ENCODE measurements at regions of chr21 and their contacts with region 1.

Region 1: GRCh38 chr21:36156339-36156814 is 247 bp upstream of the DOP1B start:
- DNase-seq: peak; percentile 100
- ATAC-seq: peak; percentile 86
- H3K4me3 Mint-ChIP-seq: peak overlapping the region; percentile 81
- H3K27ac Mint-ChIP-seq: peak overlapping the region; percentile 60
- H3K4me1 Mint-ChIP-seq: peaks cover 22% of the 10 kb centered on the region
- H3K27me3 Mint-ChIP-seq: no peaks in the 10 kb centered on the region

Region 2: GRCh38 chr21:36122977-36123376 is 33.4 kb before region 1 on chr21:
- POLR2A ChIA-PET with region 1: no interaction called
- DNase-seq: no peak
- ATAC-seq: no peak
- H3K4me3 Mint-ChIP-seq: no peak overlapping the region
- H3K27ac Mint-ChIP-seq: no peak overlapping the region
- H3K4me1 Mint-ChIP-seq: peaks cover 7% of the 10 kb centered on the region
- H3K27me3 Mint-ChIP-seq: peaks cover 12% of the 10 kb centered on the region

Region 3: DNA sequence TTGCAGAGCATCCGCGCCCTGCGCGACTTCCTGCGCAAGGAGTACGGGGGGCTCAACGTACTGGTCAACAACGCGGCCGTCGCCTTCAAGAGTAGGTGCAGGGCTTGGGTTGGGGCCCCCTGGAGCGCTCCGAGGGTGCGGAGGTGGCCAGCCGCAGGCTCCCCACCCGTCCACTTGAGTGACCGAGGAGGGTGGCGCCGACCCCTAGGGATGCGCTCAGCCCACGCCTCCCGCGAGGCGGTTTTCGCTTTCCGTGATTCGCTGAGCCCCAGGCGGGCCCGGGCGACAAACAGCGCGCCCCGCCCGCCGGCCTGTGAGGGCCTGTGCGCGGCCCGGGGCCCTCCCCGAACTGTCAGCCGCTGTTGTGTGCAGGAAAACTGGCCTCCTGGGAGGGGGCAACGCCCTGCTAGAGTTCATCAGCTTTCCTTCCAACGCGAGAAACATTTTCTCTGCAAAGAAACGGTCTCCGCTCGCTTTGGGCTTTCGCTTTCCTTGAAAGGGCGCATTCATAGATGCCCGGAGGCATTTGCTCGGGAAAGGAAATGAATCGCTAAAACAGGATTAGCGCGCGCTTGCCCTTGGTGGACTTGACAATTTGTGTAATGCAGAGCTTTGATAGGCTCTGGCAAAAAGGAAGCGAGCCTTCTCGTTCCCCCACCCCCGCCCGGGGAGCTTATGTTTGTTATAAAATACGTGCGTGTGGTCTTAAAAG is 20.8 kb before region 1 on chr21:
- POLR2A ChIA-PET with region 1: interaction called, 31 read pairs
- DNase-seq: peak; percentile 84
- ATAC-seq: peak; percentile 92
- H3K4me3 Mint-ChIP-seq: peak overlapping the region; percentile 94
- H3K27ac Mint-ChIP-seq: peak overlapping the region; percentile 91
- H3K4me1 Mint-ChIP-seq: peaks cover 25% of the 10 kb centered on the region
- H3K27me3 Mint-ChIP-seq: peaks cover 2% of the 10 kb centered on the region

Region 4: GRCh38 chr21:36171741-36172331 is 15.5 kb after region 1 on chr21:
- POLR2A ChIA-PET with region 1: interaction called, 23 read pairs
- DNase-seq: no peak
- ATAC-seq: no peak
- H3K4me3 Mint-ChIP-seq: no peak overlapping the region
- H3K27ac Mint-ChIP-seq: peak overlapping the region; percentile 75
- H3K4me1 Mint-ChIP-seq: peaks cover 22% of the 10 kb centered on the region
- H3K27me3 Mint-ChIP-seq: no peaks in the 10 kb centered on the region

Region 5: DNA sequence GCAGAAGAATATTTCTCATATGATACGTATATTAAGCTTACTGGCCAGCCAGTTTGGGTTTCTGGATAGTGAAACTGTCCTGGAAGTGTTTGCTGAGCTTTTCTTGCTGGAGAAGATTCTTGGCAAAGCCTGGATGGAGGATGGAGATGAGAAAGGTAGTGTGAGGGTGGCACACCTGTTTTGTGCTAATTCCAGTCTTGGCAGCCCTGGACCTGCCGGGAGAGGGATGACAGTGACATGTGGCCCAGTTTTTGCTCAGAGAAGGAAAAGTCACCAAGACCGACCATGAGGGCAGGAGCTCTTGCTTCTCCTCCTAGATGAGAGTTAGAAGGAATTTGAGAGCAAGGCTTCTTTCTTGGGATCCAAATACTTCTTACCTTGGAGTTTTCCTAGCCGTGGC is 34.4 kb after region 1 on chr21:
- POLR2A ChIA-PET with region 1: interaction called, 11 read pairs
- DNase-seq: no peak
- ATAC-seq: no peak
- H3K4me3 Mint-ChIP-seq: no peak overlapping the region
- H3K27ac Mint-ChIP-seq: no peak overlapping the region
- H3K4me1 Mint-ChIP-seq: peaks cover 4% of the 10 kb centered on the region
- H3K27me3 Mint-ChIP-seq: no peaks in the 10 kb centered on the region